H1 (cell line): ENCODE measurements at regions of chr6 and their contacts with region 1.

Region 1: GRCh38 chr6:15413466-15414234 is 167.8 kb downstream of the JARID2 start:
- DNase-seq: no peak
- H3K4me3 ChIP-seq: no peak overlapping the region
- H3K27ac ChIP-seq: no peak overlapping the region
- H3K4me1 ChIP-seq: peaks cover 0 to 15% (median 4%) of the 10 kb centered on the region in 4 experiments; a peak in 3 of 7 replicates
- H3K27me3 ChIP-seq: no peaks in the 10 kb centered on the region
- CTCF ChIP-seq: no peak
- EP300 ChIP-seq: no peak
- POLR2A ChIP-seq: no peak
- RAD21 ChIP-seq: no peak

Region 2: DNA sequence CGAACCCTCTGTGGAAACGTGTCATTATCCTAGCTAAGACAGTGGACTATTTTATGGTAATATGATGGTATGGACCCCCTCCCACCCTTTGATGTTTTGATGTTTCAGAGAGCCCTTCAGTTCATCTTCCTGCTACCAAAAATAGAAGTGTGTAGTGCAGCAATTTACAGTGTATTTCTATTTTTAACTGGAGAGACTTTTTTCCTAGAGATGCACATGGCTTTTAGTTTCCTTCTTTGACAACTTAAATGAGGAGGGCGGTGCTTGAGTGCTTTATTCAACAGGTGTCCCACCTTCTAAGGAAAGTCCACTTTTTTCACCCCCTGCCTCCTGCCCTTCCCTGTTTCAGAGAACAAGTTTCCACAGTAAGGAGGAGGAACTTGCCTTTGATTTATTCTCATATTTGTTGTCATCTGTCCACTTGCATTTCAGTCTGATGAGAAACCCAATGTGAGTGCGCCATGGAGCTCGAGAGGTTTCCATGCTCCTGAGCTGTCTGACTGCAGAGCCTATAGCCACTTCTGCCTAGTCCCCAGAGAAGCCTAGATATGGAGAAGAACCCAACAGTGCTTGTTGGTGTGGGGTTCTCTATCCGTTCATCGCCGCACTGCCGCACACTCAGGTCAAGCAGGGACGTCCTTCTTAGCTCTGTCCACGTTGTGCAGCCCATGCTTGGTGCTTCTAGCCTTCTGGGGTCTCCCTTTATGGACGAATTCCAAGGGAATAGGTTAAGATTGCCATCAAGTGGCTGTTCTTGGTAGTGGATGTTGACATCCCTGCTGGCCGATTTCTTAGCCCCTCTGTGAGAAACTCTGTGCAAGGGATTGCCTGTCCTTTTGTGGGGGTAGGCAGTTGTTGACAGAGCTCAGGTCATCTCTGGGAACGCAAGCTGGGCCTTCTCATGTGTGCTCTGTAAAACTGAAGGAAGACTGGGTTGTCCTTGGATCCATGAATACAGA is 23.6 kb before region 1 on chr6:
- CTCF ChIA-PET with region 1: interaction called, 16 read pairs
- POLR2A ChIA-PET with region 1: interaction called, 5 read pairs
- DNase-seq: no peak
- H3K4me3 ChIP-seq: no peak overlapping the region
- H3K27ac ChIP-seq: no peak overlapping the region
- H3K4me1 ChIP-seq: peaks cover 7 to 46% (median 33%) of the 10 kb centered on the region in 4 experiments
- H3K27me3 ChIP-seq: no peaks in the 10 kb centered on the region
- CTCF ChIP-seq: peak; percentile 35 to 80 (median 62); a peak in 3 of 4 replicates
- EP300 ChIP-seq: no peak
- POLR2A ChIP-seq: peak in 1 of 2 experiments; percentile 25
- RAD21 ChIP-seq: peak; percentile 86 to 88